Activated CD8-positive, alpha-beta T cell treated with anti-CD3 and anti-CD28 coated beads for 36 hours (primary cell): ENCODE measurements at regions of chr9 and their contacts with region 1.

Region 1: DNA sequence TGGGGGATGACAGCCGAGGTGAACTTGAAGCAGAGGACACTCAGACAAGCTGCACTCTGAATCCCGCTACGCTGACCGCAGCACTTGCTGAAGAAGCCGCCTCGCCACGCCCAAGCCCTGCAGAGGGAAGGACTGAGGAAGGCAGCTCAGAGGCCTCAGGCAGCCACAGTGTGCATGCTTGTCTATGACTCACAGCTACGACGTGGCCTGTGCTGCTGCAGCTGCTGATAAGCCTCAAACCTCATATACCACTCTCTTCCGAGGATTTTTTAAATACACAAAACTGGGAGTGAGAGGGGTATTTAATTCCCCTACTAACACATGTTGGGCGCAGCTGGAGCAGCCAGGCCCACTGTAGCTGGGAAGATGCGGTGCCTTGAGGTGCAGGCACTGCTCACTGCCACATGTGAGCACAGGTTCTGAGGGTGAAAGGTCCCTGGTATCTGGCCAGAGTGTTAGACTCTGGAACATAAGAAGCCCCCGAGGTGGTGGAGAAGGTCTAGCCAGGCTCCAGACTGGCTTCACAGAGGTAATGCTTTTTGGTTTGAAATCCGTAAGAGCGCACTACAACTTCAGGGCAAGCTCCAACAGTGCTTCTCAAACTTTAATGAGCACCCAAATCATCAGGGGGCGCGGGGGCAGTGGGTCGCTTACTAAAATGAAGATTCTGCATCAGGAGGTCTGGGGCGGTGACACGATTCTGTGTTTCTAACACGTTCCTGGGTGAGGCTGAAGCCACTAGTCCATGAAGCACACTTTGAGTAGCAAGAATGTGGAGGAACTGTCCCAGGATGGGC is 196.8 kb downstream of the AUH start:
- DNase-seq: peak; percentile 94
- ATAC-seq: peak; percentile 79
- H3K4me3 Mint-ChIP-seq: peak overlapping the region; percentile 71
- H3K27ac Mint-ChIP-seq: peak overlapping the region; percentile 96
- H3K4me1 Mint-ChIP-seq: peaks cover 61% of the 10 kb centered on the region
- H3K27me3 Mint-ChIP-seq: no peaks in the 10 kb centered on the region
- CTCF ChIP-seq: no peak

Region 2: GRCh38 chr9:90815183-90815943 is 349.6 kb before region 1 on chr9:
- CTCF ChIA-PET with region 1: no interaction called
- POLR2A ChIA-PET with region 1: no interaction called
- intact Hi-C with region 1: no loop called
- DNase-seq: peak; percentile 26
- ATAC-seq: no peak
- H3K4me3 Mint-ChIP-seq: no peak overlapping the region
- H3K27ac Mint-ChIP-seq: peak overlapping the region; percentile 64
- H3K4me1 Mint-ChIP-seq: peaks cover 16% of the 10 kb centered on the region
- H3K27me3 Mint-ChIP-seq: peaks cover 2% of the 10 kb centered on the region
- CTCF ChIP-seq: no peak

Region 3: DNA sequence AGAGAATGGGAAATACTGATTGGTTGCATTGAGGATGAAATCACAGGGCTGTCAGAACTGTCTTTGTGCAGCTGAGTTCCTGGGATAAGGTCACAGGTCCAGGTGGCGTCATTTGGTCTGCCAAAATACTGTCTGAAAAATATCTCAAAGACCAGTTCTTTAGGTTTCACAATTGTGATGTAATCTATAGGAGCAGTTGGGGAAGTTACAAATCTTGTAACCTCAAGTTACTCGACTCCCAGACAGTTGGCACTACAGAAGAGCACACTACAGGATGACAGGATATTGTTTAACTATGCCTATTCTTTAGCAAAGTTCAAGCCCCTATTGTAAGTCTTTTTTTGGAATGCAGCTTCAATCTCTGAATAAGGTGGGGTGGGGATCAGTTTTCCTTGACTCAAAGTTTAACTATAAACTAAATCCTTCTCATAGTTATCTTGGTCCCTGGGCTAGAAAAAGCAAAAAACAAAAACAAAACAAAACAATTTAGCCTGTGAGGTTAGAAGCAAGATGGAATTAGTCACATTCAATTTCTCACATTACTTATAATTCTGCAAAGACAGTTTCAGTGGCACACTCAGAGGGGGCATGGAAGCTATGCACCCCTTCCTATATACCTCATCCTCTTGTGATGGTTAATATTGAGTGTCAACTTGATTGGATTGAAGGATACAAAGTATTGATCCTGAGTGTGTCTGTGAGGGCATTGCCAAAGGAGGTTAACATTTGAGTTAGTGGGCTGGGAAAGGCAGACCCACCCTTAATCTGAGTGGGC is 79.2 kb before region 1 on chr9:
- CTCF ChIA-PET with region 1: no interaction called
- POLR2A ChIA-PET with region 1: no interaction called
- intact Hi-C with region 1: no loop called
- DNase-seq: no peak
- ATAC-seq: peak; percentile 72
- H3K4me3 Mint-ChIP-seq: no peak overlapping the region
- H3K27ac Mint-ChIP-seq: peak overlapping the region; percentile 75
- H3K4me1 Mint-ChIP-seq: peaks cover 26% of the 10 kb centered on the region
- H3K27me3 Mint-ChIP-seq: peaks cover 5% of the 10 kb centered on the region
- CTCF ChIP-seq: no peak

Region 4: DNA sequence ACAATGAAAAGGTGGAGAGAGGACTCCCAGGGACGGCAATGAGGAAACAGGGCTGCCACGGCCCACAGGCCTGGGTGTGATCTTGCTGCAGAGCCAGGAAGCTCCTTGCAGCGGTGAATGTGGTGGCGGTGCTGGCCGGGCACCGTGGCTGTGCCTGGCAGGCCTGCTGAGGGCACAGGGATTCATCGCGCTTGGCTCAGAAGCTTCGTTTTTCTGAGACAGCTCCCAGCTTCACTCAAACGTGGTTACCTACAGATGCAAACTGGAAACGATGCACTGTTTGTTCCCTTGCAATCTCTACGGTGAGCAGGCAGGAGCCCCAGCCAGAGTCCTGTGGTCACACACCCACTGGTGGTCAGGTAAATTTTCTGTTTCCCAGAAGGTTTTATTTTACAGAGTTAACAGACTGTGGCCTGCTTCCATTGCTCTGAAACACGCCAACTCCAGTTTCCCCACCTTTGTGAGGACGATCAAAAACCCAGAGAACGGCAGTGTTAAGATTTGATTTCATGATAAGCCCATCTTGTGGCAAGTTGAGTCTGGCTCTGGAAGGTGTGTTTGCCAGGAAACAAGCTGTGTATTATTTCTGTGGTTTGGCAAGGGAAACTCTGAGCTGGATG is 12.8 kb after region 1 on chr9:
- CTCF ChIA-PET with region 1: interaction called, 10 read pairs
- POLR2A ChIA-PET with region 1: interaction called, 36 read pairs
- intact Hi-C with region 1: no loop called
- DNase-seq: peak; percentile 77
- ATAC-seq: peak; percentile 66
- H3K4me3 Mint-ChIP-seq: peak overlapping the region; percentile 51
- H3K27ac Mint-ChIP-seq: peak overlapping the region; percentile 95
- H3K4me1 Mint-ChIP-seq: peaks cover 58% of the 10 kb centered on the region
- H3K27me3 Mint-ChIP-seq: no peaks in the 10 kb centered on the region
- CTCF ChIP-seq: no peak